ENCODE measurements at regions of chr12 and their contacts with region 1.

Region 1: GRCh38 chr12:89019408-89020120 is 332.7 kb downstream of the DUSP6 start:
- DNase-seq: peak; percentile 79
- ATAC-seq: peak; percentile 95
- H3K4me3 ChIP-seq: peak overlapping the region in 1 of 5 experiments; percentile 30
- H3K4me3 Mint-ChIP-seq: no peak overlapping the region
- H3K27ac ChIP-seq: no peak overlapping the region
- H3K27ac Mint-ChIP-seq: no peak overlapping the region
- H3K4me1 ChIP-seq: peaks cover 5% of the 10 kb centered on the region in 2 donors
- H3K4me1 Mint-ChIP-seq: peaks cover 3% of the 10 kb centered on the region
- H3K27me3 ChIP-seq: peaks cover 0 to 2% (median 0%) of the 10 kb centered on the region in 4 experiments
- H3K27me3 Mint-ChIP-seq: peaks cover 8% of the 10 kb centered on the region
- CTCF ChIP-seq: peak; percentile 81

Region 2: DNA sequence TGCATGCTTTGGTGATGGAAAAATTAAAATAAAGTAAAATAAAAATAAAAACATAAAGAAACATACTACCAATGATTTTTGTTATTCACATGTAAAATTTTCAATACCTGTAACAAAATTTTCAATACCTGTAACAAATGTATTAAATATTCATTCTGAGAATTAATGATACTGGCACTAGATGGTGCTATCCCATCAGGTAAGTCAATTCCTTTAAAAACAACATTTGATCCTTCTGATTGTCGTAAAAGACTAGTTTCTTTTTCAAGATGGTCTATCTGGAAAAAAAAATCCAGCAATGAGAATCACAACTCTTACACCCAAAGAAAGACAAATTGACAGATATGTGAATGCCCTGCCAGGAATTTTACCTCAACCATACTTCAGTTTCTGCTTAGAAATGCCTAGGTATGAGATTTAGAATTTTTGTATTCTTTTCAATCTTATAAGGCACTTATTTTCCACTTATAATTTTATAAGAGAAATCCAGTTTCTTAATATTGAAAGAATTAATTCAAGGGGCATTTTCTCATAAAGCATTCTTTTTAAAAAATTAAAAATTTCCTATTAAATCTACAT is 908.4 kb before region 1 on chr12:
- CTCF ChIA-PET with region 1: no interaction called
- POLR2A ChIA-PET with region 1: no interaction called
- intact Hi-C with region 1: loop called (anchors 5 kb)
- DNase-seq: peak; percentile 26
- ATAC-seq: no peak
- H3K4me3 ChIP-seq: no peak overlapping the region
- H3K4me3 Mint-ChIP-seq: no peak overlapping the region
- H3K27ac ChIP-seq: no peak overlapping the region
- H3K27ac Mint-ChIP-seq: no peak overlapping the region
- H3K4me1 ChIP-seq: no peaks in the 10 kb centered on the region
- H3K4me1 Mint-ChIP-seq: peaks cover 2% of the 10 kb centered on the region
- H3K27me3 ChIP-seq: no peaks in the 10 kb centered on the region
- H3K27me3 Mint-ChIP-seq: no peaks in the 10 kb centered on the region
- CTCF ChIP-seq: peak; percentile 42

Region 3: DNA sequence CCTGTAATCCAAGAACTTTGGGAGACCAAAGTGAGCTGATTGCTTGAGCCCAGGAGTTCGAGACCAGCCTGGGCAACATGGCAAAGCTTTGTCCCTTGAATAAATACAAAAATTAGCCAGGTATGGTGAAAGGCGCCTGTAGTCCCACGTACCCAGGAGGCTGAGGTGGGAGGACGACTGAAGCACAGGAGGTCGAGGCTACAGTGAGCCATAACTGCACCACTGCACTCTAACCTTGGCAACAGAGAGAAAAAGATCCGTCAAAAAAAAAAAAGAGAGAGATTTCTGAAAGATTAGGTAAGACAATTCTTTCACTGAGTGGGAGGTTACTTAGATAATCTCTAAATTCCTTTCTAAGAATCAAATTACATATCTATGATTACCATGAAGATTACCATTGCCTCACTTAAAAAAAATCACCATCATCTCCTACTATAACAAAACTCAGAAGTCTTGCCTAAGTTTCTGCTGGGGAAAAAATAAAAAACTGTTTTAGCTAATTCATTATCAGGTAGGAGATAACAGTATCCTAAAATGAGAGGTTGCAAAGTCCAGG is 34.0 kb before region 1 on chr12:
- CTCF ChIA-PET with region 1: no interaction called
- POLR2A ChIA-PET with region 1: no interaction called
- intact Hi-C with region 1: no loop called
- DNase-seq: no peak
- ATAC-seq: no peak
- H3K4me3 ChIP-seq: no peak overlapping the region
- H3K4me3 Mint-ChIP-seq: no peak overlapping the region
- H3K27ac ChIP-seq: no peak overlapping the region
- H3K27ac Mint-ChIP-seq: no peak overlapping the region
- H3K4me1 ChIP-seq: no peaks in the 10 kb centered on the region
- H3K4me1 Mint-ChIP-seq: no peaks in the 10 kb centered on the region
- H3K27me3 ChIP-seq: no peaks in the 10 kb centered on the region
- H3K27me3 Mint-ChIP-seq: peaks cover 24% of the 10 kb centered on the region
- CTCF ChIP-seq: no peak

Region 4: DNA sequence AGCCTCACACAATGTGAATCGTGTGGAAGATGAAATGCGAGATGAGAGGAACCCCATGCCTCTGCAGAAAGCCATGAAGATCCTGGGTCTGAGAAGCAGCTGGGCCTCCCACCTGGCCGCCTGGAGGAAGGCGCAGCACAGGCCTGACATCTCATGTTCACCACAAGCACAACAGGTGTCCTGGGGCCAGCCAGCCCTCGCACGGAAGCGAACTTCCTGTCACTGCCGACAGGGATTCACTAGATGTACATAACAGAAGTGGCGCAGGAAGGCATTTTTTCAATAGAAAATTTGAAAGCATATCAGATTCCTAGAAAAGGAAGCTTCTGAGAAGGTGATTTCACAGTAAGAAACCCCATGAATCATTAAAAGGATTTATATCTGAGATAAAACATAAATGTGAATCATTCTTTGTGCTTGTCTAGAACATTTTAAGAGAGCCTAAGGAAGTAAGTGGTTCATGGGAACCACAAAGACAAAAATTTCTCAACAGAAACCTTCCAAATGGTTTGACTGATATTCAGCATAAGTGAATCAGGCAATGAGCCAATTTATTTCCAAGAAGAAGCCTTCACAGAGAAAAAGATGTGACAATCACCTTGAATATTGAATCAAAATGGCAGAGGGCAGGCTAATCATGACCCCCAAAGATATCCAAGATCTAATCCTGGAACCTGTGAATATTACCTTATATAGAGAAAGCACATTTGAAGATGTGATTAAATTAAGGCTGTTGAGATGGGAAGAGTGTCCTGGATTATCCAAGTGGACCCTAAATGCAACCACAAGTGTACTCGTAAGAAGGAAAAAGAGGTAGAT is 20.8 kb after region 1 on chr12:
- CTCF ChIA-PET with region 1: interaction called, 11 read pairs
- POLR2A ChIA-PET with region 1: no interaction called
- intact Hi-C with region 1: no loop called
- DNase-seq: peak; percentile 53
- ATAC-seq: peak; percentile 65
- H3K4me3 ChIP-seq: no peak overlapping the region
- H3K4me3 Mint-ChIP-seq: no peak overlapping the region
- H3K27ac ChIP-seq: no peak overlapping the region
- H3K27ac Mint-ChIP-seq: no peak overlapping the region
- H3K4me1 ChIP-seq: peaks cover 10 to 11% of the 10 kb centered on the region in 2 donors
- H3K4me1 Mint-ChIP-seq: peaks cover 11% of the 10 kb centered on the region
- H3K27me3 ChIP-seq: no peaks in the 10 kb centered on the region
- H3K27me3 Mint-ChIP-seq: peaks cover 3% of the 10 kb centered on the region
- CTCF ChIP-seq: no peak

Region 5: DNA sequence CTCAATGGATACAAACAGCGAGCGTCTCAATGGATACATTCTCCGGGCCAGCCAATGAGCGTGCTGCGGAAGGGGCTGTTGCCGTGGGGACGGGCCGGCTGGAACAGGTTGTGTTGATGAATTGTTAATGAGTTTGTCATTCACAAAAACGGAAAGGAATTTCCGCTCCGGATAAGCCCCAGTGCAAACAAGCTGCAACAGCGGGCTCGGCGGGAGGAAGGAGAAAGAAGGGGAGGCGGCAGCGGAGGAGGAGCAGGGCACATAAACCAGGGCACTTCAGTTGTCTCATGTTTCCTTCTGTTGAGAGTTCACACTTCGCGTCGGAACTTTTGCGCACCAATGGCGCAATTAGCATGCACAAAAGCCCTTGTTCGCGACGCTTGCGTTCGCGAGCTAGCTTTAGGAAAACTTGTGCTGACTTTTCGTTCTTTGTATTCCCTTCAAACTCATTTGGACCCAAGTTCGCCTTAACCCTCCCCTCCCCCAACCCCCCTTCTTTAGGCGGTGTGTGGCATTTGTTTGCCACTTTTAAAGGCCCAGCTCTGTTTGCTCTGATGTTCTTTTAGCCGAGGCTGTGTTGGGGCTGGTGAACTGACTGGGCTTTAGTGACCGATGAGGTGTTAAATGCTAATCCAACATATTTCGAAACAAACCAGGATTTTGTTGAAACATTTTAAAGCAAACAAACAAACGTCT is 333.1 kb after region 1 on chr12 and contains the start of gene DUSP6:
- CTCF ChIA-PET with region 1: interaction called, 3 read pairs
- POLR2A ChIA-PET with region 1: no interaction called
- intact Hi-C with region 1: loop called (anchors 2 kb)
- DNase-seq: peak; percentile 88
- ATAC-seq: peak; percentile 64
- H3K4me3 ChIP-seq: peak within 1 kb of the TSS; percentile 63 to 94 (median 78)
- H3K4me3 Mint-ChIP-seq: peak within 1 kb of the TSS; percentile 97
- H3K27ac ChIP-seq: peak within 1 kb of the TSS; percentile 82 to 87
- H3K27ac Mint-ChIP-seq: peak within 1 kb of the TSS; percentile 96
- H3K4me1 ChIP-seq: peaks cover 44 to 52% of the 10 kb centered on the region in 2 donors
- H3K4me1 Mint-ChIP-seq: peaks cover 68% of the 10 kb centered on the region
- H3K27me3 ChIP-seq: no peaks in the 10 kb centered on the region
- H3K27me3 Mint-ChIP-seq: no peaks in the 10 kb centered on the region
- CTCF ChIP-seq: no peak
- total RNA-seq, gene DUSP6: 1.6 and 3.2 TPM in 2 replicates

Region 6: GRCh38 chr12:89470741-89471509 is 451.4 kb after region 1 on chr12:
- CTCF ChIA-PET with region 1: interaction called, 20 read pairs
- POLR2A ChIA-PET with region 1: no interaction called
- intact Hi-C with region 1: no loop called
- DNase-seq: peak; percentile 70
- ATAC-seq: peak; percentile 61
- H3K4me3 ChIP-seq: no peak overlapping the region
- H3K4me3 Mint-ChIP-seq: no peak overlapping the region
- H3K27ac ChIP-seq: no peak overlapping the region
- H3K27ac Mint-ChIP-seq: peak overlapping the region; percentile 63
- H3K4me1 ChIP-seq: peaks cover 22 to 32% of the 10 kb centered on the region in 2 donors
- H3K4me1 Mint-ChIP-seq: peaks cover 47% of the 10 kb centered on the region
- H3K27me3 ChIP-seq: no peaks in the 10 kb centered on the region
- H3K27me3 Mint-ChIP-seq: no peaks in the 10 kb centered on the region
- CTCF ChIP-seq: peak; percentile 82

Region 7: GRCh38 chr12:89529738-89530137 is 510.2 kb after region 1 on chr12:
- CTCF ChIA-PET with region 1: interaction called, 51 read pairs
- POLR2A ChIA-PET with region 1: no interaction called
- intact Hi-C with region 1: loop called (anchors 1 kb)
- DNase-seq: peak; percentile 67
- ATAC-seq: no peak
- H3K4me3 ChIP-seq: no peak overlapping the region
- H3K4me3 Mint-ChIP-seq: no peak overlapping the region
- H3K27ac ChIP-seq: no peak overlapping the region
- H3K27ac Mint-ChIP-seq: no peak overlapping the region
- H3K4me1 ChIP-seq: peaks cover 6 to 12% of the 10 kb centered on the region in 2 donors
- H3K4me1 Mint-ChIP-seq: peaks cover 27% of the 10 kb centered on the region
- H3K27me3 ChIP-seq: no peaks in the 10 kb centered on the region
- H3K27me3 Mint-ChIP-seq: no peaks in the 10 kb centered on the region
- CTCF ChIP-seq: peak; percentile 81

Region 8: GRCh38 chr12:90959538-90960139 is 1940.1 kb after region 1 on chr12:
- CTCF ChIA-PET with region 1: no interaction called
- POLR2A ChIA-PET with region 1: no interaction called
- intact Hi-C with region 1: loop called (anchors 2 kb)
- DNase-seq: peak; percentile 40
- ATAC-seq: peak; percentile 58
- H3K4me3 ChIP-seq: no peak overlapping the region
- H3K4me3 Mint-ChIP-seq: no peak overlapping the region
- H3K27ac ChIP-seq: no peak overlapping the region
- H3K27ac Mint-ChIP-seq: no peak overlapping the region
- H3K4me1 ChIP-seq: no peaks in the 10 kb centered on the region
- H3K4me1 Mint-ChIP-seq: no peaks in the 10 kb centered on the region
- H3K27me3 ChIP-seq: no peaks in the 10 kb centered on the region
- H3K27me3 Mint-ChIP-seq: no peaks in the 10 kb centered on the region
- CTCF ChIP-seq: peak; percentile 82